GM12878 (cell line): ENCODE measurements at regions of chr10 and their contacts with region 1.

Region 1: DNA sequence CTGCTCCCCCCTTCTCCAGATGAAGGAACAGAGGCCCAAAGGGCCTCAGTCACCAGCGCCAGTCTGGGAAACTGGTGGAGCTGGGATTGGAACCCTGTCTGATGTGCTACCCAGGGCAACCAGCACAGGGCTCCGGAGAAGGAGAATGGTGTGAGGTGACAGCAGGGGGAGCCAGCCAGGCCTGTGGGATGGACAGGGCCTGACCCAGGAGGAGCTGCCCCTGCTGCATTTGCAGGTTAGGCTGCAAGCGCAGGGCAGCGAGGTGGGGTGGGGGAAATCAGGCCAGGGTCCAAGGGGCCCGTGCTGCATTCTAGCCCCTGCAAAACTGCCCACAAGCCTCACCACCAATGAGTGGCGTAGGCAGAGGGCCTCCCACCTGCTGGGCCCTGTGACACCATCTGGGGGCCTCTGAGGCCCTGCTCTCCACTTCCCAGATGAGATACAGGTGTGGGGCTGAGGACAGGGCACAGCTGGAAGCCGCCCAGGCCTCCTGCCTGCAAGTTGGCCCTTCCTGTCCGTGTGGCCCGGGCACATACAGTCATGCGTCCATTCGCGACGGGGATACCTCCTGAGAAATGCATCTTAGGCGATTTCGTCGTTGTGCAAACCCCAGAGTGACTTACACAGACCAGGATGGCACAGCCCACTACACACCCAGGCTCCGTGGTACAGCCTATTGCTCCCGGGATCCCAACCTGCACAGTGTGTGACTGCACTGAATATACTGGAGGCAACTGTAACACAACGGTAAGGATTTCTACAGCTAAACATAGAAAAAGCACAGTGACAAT is 45.3 kb downstream of the RASGEF1A start:
- DNase-seq: no peak
- ATAC-seq: peak; percentile 65
- H3K4me3 ChIP-seq: no peak overlapping the region
- H3K27ac ChIP-seq: no peak overlapping the region
- H3K4me1 ChIP-seq: peaks cover 8% of the 10 kb centered on the region
- H3K27me3 ChIP-seq: peaks cover 0 to 1% of the 10 kb centered on the region in 2 experiments; a peak in 2 of 4 replicates
- CTCF ChIP-seq: peak in 2 of 3 experiments; percentile 4 to 27; a peak in 3 of 6 replicates
- EP300 ChIP-seq: no peak
- POLR2A ChIP-seq: no peak
- RAD21 ChIP-seq: no peak

Region 2: DNA sequence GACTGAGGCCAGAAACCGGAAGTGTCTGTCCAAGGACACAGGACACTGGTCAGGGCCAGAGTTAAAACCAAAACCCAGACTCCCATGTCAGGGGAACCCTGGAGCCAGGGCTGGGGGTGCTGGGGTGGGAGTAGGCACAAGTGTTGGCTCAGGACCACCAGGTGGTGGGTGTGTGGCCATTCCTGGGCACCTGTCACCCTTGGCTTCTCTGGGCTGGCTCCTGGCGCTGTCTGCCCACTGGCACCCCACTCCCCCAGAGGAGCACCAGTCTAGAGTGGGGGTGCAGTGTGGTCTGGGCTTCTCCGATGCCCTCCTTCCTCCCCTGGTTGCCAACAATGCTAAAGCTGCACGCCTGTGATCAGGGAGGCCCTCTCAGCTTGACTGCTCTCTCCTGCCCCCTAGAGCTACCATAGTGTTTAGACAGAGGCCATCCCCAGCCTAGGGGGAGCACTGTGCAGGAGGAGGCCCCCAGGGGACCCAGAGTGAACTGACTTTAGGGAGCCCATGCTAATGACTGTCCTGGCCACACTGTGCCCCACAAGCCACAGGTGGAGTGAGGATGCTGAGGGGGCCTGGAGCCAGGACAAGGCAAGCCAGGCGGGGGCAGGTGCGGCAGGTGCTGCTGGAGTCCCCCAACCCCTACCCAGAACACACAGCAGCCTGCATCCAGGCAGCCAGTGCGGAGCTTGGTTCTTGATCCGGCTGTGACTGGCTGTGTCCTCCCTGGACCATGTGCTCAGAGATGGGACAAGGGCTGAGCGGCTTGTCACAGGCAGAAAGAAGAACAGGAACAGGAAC is 34.2 kb after region 1 on chr10:
- CTCF ChIA-PET with region 1: interaction called, 43 read pairs
- POLR2A ChIA-PET with region 1: no interaction called
- RAD21 ChIA-PET with region 1: interaction called, 14 read pairs
- SMC1A ChIA-PET with region 1: interaction called, 17 read pairs
- in situ Hi-C with region 1: no loop called
- intact Hi-C with region 1: no loop called
- DNase-seq: no peak
- ATAC-seq: peak; percentile 85
- H3K4me3 ChIP-seq: no peak overlapping the region
- H3K27ac ChIP-seq: no peak overlapping the region
- H3K4me1 ChIP-seq: no peaks in the 10 kb centered on the region
- H3K27me3 ChIP-seq: no peaks in the 10 kb centered on the region
- CTCF ChIP-seq: peak; percentile 57 to 62 (median 60)
- EP300 ChIP-seq: no peak
- POLR2A ChIP-seq: no peak
- RAD21 ChIP-seq: peak; percentile 33